ENCODE measurements at regions of chr13 and their contacts with region 1.

Region 1: GRCh38 chr13:98981369-98982080 is 3.7 kb upstream of the DOCK9 start:
- DNase-seq: no peak
- H3K4me3 ChIP-seq: no peak overlapping the region
- H3K27ac ChIP-seq: no peak overlapping the region
- H3K4me1 ChIP-seq: peaks cover 0 to 36% (median 12%) of the 10 kb centered on the region in 4 donors
- H3K27me3 ChIP-seq: no peaks in the 10 kb centered on the region
- CTCF ChIP-seq: no peak

Region 2: DNA sequence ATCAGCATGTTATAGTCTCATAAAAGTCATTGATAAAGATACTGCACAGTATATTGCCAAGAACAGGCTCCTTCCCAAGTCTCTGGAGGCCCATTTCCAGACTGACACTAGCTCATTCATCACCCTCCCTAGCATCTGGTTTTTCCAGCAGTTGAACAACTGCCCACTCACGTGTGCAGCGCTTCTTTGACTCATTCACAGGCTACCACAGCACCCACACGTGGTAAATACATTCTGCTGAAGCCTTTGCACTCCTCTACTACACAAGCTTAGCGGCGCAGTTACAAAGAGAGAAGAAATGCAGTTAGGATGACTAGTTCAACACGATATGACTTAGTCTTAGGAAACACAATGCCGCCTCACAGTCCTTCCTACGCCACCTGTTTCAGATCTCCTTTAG is 91.3 kb before region 1 on chr13:
- intact Hi-C with region 1: no loop called
- DNase-seq: no peak
- H3K4me3 ChIP-seq: no peak overlapping the region
- H3K27ac ChIP-seq: no peak overlapping the region
- H3K4me1 ChIP-seq: no peaks in the 10 kb centered on the region
- H3K27me3 ChIP-seq: no peaks in the 10 kb centered on the region
- CTCF ChIP-seq: no peak

Region 3: DNA sequence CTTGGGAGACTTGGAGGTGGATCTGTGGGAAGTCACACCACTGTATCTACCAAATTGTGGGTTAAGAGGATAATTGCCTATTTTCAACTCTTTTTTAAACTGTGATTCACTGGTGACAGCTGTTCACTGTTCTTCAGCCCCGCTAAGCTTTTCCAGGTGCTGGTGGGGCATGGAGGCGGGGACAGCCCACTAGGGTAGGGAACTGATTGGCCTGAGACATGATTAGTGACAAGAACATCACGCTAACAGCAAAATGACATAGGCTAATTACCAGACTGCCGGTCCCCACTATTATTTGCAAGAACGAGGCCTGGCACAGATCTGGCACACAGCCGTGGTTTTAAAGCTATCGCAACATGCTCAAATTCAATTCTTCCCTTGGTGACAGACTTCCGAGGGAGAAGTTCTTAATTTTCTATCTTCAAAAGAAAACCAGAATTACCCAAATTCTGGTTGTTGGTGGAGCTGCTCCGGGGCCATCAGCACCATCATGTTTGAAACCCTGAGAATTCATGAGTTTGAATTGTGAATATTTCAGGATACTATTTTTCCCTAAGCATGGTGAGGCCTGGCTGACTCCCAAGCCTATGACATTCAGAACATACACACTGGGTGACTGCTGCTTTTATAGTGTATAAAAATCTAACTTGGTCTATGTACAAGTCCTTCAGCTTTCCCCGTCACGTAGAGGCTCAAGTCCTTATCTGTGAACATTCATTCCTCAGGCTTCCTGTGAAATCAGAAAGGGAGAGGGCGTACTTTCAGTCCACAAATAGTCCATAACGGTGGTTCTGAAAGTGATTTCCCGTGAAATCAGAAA is 21.5 kb before region 1 on chr13:
- intact Hi-C with region 1: loop called (anchors 2 kb)
- DNase-seq: no peak
- H3K4me3 ChIP-seq: no peak overlapping the region
- H3K27ac ChIP-seq: no peak overlapping the region
- H3K4me1 ChIP-seq: peaks cover 0 to 33% (median 7%) of the 10 kb centered on the region in 4 donors
- H3K27me3 ChIP-seq: no peaks in the 10 kb centered on the region
- CTCF ChIP-seq: no peak

Measured in tibial artery (tissue), 4 donors.